Right ventricle myocardium inferior (tissue), 1 donor: ENCODE measurements at regions of chr5 and their contacts with region 1.

Region 1: DNA sequence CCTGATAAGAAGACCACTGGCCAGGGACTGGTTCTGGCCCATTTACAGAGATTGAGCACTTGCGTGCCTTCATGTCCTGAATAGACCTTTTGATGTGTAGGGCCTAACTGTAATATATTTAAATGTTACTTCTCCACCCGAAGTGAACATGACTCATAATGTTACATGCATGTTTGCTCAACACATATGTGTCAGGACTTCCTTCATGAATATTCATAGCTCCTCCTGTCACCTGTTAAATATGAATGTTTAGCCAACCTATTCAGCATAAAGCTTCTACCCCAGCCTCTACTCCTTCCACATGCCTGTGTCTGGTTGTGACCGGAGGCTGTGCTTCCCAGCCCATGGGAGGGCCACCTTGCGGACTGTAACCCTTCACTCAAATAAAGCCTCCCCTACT is 457.5 kb downstream of the IRX1 start:
- DNase-seq: no peak
- ATAC-seq: no peak

Region 2: GRCh38 chr5:3858524-3858923 is 194.6 kb before region 1 on chr5:
- intact Hi-C with region 1: loop called (anchors 5 kb)
- DNase-seq: no peak
- ATAC-seq: no peak

Region 3: GRCh38 chr5:4095918-4096630 is 42.9 kb after region 1 on chr5:
- intact Hi-C with region 1: no loop called
- DNase-seq: no peak
- ATAC-seq: peak; percentile 71